ENCODE measurements at regions of chr9 and their contacts with region 1.

Region 1: DNA sequence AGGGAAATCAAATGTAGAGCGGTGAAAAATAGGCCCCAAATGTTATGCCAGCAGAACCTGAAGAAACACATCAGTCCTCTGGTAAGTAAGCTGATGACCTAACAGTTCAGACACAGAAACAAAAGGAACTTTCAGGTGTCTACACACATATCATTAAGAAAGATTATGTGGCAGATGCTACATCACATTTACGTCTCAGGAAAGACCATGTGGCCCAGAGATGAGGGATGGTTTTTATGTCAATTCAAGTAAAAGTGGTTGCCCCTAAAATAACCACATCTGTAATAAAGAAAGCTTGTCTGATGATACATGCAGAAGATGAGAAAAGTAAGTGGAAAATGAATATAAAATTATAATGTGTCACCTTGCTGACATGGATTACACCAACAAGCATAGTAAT is 31.4 kb downstream of the GNAQ start:
- DNase-seq: peak in 3 of 10 donors; percentile 25 to 45 (median 27)
- ATAC-seq: peak; percentile 23 to 83
- H3K4me3 Mint-ChIP-seq: no peak overlapping the region
- H3K27ac Mint-ChIP-seq: no peak overlapping the region
- H3K4me1 Mint-ChIP-seq: peaks cover 26 to 67% (median 61%) of the 10 kb centered on the region in 4 donors
- H3K27me3 Mint-ChIP-seq: no peaks in the 10 kb centered on the region

Region 2: GRCh38 chr9:77981332-77981731 is 18.9 kb before region 1 on chr9:
- POLR2A ChIA-PET with region 1: interaction called, 11 read pairs
- DNase-seq: no peak
- ATAC-seq: peak in 1 of 2 donors; percentile 33
- H3K4me3 Mint-ChIP-seq: peak overlapping the region; percentile 32 to 75 (median 58)
- H3K27ac Mint-ChIP-seq: peak overlapping the region in 9 of 10 donors; percentile 29 to 88 (median 76)
- H3K4me1 Mint-ChIP-seq: peaks cover 36 to 81% (median 78%) of the 10 kb centered on the region in 4 donors
- H3K27me3 Mint-ChIP-seq: no peaks in the 10 kb centered on the region

Measured in naive thymus-derived CD8-positive, alpha-beta T cell (primary cell).